Natural killer cell (primary cell): ENCODE measurements at regions of chr15 and their contacts with region 1.

Region 1: GRCh38 chr15:43105778-43106485 is at the start of gene UBR1:
- DNase-seq: peak; percentile 83 to 95
- ATAC-seq: peak; percentile 93 to 97 (median 95)
- H3K4me3 ChIP-seq: peak within 1 kb of the TSS; percentile 74
- H3K4me3 Mint-ChIP-seq: peak within 1 kb of the TSS; percentile 98
- H3K27ac ChIP-seq: peak within 1 kb of the TSS; percentile 95
- H3K27ac Mint-ChIP-seq: peak within 1 kb of the TSS; percentile 99 to 100
- H3K4me1 ChIP-seq: peaks cover 16% of the 10 kb centered on the region
- H3K4me1 Mint-ChIP-seq: peaks cover 51 to 52% of the 10 kb centered on the region in 2 donors
- H3K27me3 ChIP-seq: no peaks in the 10 kb centered on the region
- H3K27me3 Mint-ChIP-seq: peaks cover 2 to 6% of the 10 kb centered on the region in 2 donors
- CTCF ChIP-seq: no peak
- total RNA-seq, gene UBR1: 54.3 to 70.5 (median 61.4) TPM

Region 2: GRCh38 chr15:42994546-42994945 is 111.4 kb before region 1 on chr15:
- intact Hi-C with region 1: no loop called
- DNase-seq: no peak
- ATAC-seq: no peak
- H3K4me3 ChIP-seq: no peak overlapping the region
- H3K4me3 Mint-ChIP-seq: no peak overlapping the region
- H3K27ac ChIP-seq: no peak overlapping the region
- H3K27ac Mint-ChIP-seq: no peak overlapping the region
- H3K4me1 ChIP-seq: no peaks in the 10 kb centered on the region
- H3K4me1 Mint-ChIP-seq: no peaks in the 10 kb centered on the region
- H3K27me3 ChIP-seq: no peaks in the 10 kb centered on the region
- H3K27me3 Mint-ChIP-seq: no peaks in the 10 kb centered on the region
- CTCF ChIP-seq: no peak

Region 3: DNA sequence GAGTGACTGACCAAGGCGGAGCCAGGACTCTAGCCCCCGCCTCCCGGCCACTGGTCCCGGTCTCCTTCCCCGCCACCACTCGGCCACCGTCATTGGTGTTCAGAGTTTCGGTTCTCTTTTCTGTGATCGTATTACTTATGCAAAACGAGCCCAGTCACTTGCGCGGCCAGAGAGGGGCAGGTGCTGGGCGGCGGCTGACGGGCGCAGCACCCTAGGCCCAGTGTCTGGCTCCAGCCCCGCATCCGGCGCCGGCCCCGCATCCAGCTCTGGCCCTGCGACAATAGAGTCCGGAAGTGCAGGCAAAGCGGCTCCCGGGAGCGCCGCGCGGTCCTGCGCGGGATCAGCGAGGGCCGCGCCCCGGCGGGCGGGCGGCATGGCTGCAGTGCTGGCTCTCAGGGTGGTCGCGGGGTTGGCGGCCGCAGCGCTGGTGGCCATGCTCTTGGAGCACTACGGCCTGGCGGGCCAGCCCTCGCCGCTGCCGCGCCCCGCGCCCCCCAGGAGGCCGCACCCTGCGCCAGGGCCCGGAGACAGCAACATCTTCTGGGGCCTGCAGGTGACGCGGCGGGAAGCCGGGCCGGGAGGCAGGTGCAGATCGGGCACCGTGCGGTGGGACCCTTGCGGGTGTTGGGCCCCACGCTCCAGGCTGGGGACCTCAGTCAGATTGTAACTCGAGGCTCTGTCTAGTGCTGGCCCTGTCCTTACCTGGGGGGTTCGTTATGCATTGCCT is 27.7 kb after region 1 on chr15 and contains the start of gene TMEM62:
- intact Hi-C with region 1: loop called (anchors 1 kb)
- DNase-seq: peak; percentile 72
- ATAC-seq: peak; percentile 86 to 93 (median 89)
- H3K4me3 ChIP-seq: peak within 1 kb of the TSS; percentile 54
- H3K4me3 Mint-ChIP-seq: peak within 1 kb of the TSS; percentile 94
- H3K27ac ChIP-seq: peak within 1 kb of the TSS; percentile 74
- H3K27ac Mint-ChIP-seq: peak within 1 kb of the TSS; percentile 89 to 97
- H3K4me1 ChIP-seq: peaks cover 12% of the 10 kb centered on the region
- H3K4me1 Mint-ChIP-seq: peaks cover 16 to 29% of the 10 kb centered on the region in 2 donors
- H3K27me3 ChIP-seq: no peaks in the 10 kb centered on the region
- H3K27me3 Mint-ChIP-seq: peaks cover 0 to 7% of the 10 kb centered on the region in 2 donors
- CTCF ChIP-seq: no peak
- total RNA-seq, gene TMEM62: 39.4 to 43.8 (median 40.8) TPM

Region 4: GRCh38 chr15:43185157-43186017 is 79.5 kb after region 1 on chr15 and contains the start of gene CCNDBP1:
- intact Hi-C with region 1: loop called (anchors 5 kb)
- DNase-seq: peak; percentile 82 to 90
- ATAC-seq: peak; percentile 83 to 96 (median 91)
- H3K4me3 ChIP-seq: peak within 1 kb of the TSS; percentile 73
- H3K4me3 Mint-ChIP-seq: peak within 1 kb of the TSS; percentile 93
- H3K27ac ChIP-seq: peak within 1 kb of the TSS; percentile 93
- H3K27ac Mint-ChIP-seq: peak within 1 kb of the TSS; percentile 91 to 96
- H3K4me1 ChIP-seq: peaks cover 16% of the 10 kb centered on the region
- H3K4me1 Mint-ChIP-seq: peaks cover 35 to 49% of the 10 kb centered on the region in 2 donors
- H3K27me3 ChIP-seq: no peaks in the 10 kb centered on the region
- H3K27me3 Mint-ChIP-seq: no peaks in the 10 kb centered on the region
- CTCF ChIP-seq: peak; percentile 40
- total RNA-seq, gene CCNDBP1: 120 to 150 (median 129) TPM

Region 5: GRCh38 chr15:43492673-43493601 is 387.0 kb after region 1 on chr15 and contains the start of gene TP53BP1:
- intact Hi-C with region 1: no loop called
- DNase-seq: peak; percentile 93 to 97
- ATAC-seq: peak; percentile 97 to 100 (median 99)
- H3K4me3 ChIP-seq: peak within 1 kb of the TSS; percentile 75
- H3K4me3 Mint-ChIP-seq: peak within 1 kb of the TSS; percentile 97
- H3K27ac ChIP-seq: peak within 1 kb of the TSS; percentile 82
- H3K27ac Mint-ChIP-seq: peak within 1 kb of the TSS; percentile 93 to 95
- H3K4me1 ChIP-seq: peaks cover 4% of the 10 kb centered on the region
- H3K4me1 Mint-ChIP-seq: peaks cover 24 to 28% of the 10 kb centered on the region in 2 donors
- H3K27me3 ChIP-seq: no peaks in the 10 kb centered on the region
- H3K27me3 Mint-ChIP-seq: no peaks in the 10 kb centered on the region
- CTCF ChIP-seq: no peak
- total RNA-seq, gene TP53BP1: 27.9 to 32.9 (median 31.5) TPM